Activated CD4-positive, alpha-beta T cell treated with anti-CD3 and anti-CD28 coated beads, Interleukin-2, amount 10 ng/mL, durations not matched to agents 7 days and 5 days (primary cell): ENCODE measurements at regions of chr3 and their contacts with region 1.

Region 1: DNA sequence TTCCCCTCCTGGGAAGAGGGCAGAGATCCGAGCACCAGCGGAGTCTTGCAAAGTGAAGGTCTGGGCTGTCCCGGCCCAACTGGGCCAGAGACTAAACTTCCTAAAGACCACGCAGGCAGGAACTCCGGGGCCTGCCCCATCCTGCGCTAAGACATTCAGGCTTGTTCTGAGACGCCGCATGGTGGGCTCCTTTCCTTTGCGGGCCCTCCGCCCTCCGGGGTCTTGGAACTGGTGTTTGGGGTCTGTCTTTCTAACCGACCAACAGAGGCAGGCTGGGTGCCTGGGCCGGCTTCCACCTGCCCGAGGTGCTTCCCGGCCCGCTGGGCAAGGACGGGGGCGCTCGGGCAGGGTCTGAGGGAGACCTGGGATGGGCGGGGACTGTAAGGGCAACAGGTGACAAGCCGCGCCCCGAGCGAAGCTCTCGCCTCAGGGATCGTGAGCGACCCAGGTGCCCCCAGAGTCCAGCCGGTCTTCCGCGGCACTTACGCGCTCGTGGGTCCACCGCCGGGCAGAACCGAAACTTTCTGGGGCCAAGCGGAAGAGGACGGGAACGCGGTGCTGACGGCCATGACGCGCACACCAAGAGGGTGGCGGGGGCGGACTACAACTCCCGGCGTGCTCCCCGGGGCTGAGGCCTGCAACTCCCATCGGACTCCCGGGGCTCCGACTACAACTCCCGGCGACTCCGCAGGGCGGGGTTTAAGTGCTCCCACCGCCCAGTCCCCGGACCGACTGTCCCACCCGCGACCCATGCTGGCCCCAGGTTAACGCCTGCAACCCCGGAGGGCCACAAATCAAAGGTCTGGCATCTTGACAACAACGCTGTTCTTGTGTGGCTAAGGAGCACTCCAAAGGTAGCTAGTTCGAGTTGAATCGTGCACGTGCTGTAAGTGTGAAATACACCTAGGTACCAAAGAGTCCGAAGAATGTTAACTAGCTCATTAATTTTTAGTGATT is at the start of gene FYCO1:
- DNase-seq: peak; percentile 87
- H3K4me3 Mint-ChIP-seq: peak within 1 kb of the TSS; percentile 83
- H3K27ac Mint-ChIP-seq: peak within 1 kb of the TSS; percentile 95
- H3K4me1 Mint-ChIP-seq: peaks cover 49% of the 10 kb centered on the region
- H3K27me3 Mint-ChIP-seq: peaks cover 7% of the 10 kb centered on the region
- total RNA-seq, gene FYCO1: 15.1 to 15.7 TPM

Region 2: DNA sequence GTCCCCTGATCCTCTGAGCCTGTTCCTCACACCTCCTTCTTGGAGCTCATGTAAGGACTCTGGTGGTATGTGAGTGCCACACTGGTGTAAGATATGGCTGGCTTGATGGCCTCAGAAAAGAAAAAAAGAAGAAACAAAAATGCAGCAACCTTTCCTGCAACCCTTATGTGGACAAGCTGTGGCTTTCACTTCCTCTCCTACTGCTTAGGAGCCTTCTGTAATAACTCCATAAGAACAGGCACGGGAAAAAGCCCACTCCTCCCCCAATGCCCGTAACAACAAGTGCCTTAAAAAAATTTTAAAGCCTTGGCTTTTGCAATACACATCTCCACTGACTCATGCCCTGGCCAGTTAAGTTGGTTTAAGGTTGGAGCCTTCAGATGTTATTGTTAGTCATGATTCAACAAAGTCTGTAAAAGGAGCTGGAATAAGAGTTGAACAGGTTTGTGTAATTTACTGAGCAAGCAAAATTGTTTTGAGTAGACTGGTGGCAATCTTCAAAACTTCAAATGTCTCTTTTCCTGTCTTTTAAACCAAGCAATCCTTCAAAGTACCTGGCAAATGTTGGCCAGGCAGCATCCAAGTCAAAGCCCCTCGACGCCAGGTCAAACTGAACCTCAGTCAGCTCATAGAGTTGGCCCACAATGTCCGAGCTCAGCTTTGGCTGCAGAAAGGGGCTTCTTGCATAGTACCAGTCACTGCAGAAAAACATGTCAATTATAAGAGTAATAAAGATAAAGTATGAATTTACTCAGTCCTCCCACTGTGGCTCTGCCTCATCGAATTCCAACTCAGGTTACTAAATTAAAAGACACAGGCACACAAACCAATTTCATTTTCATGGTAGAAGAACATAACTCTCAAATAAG is 22.7 kb before region 1 on chr3:
- CTCF ChIA-PET with region 1: interaction called, 21 read pairs
- POLR2A ChIA-PET with region 1: no interaction called
- DNase-seq: no peak
- H3K4me3 Mint-ChIP-seq: no peak overlapping the region
- H3K27ac Mint-ChIP-seq: peak overlapping the region; percentile 78
- H3K4me1 Mint-ChIP-seq: peaks cover 66% of the 10 kb centered on the region
- H3K27me3 Mint-ChIP-seq: no peaks in the 10 kb centered on the region

Region 3: GRCh38 chr3:45978006-45978761 is 17.3 kb before region 1 on chr3:
- CTCF ChIA-PET with region 1: interaction called, 45 read pairs
- POLR2A ChIA-PET with region 1: no interaction called
- DNase-seq: peak; percentile 79
- H3K4me3 Mint-ChIP-seq: peak overlapping the region; percentile 58
- H3K27ac Mint-ChIP-seq: peak overlapping the region; percentile 95
- H3K4me1 Mint-ChIP-seq: peaks cover 81% of the 10 kb centered on the region
- H3K27me3 Mint-ChIP-seq: no peaks in the 10 kb centered on the region

Region 4: DNA sequence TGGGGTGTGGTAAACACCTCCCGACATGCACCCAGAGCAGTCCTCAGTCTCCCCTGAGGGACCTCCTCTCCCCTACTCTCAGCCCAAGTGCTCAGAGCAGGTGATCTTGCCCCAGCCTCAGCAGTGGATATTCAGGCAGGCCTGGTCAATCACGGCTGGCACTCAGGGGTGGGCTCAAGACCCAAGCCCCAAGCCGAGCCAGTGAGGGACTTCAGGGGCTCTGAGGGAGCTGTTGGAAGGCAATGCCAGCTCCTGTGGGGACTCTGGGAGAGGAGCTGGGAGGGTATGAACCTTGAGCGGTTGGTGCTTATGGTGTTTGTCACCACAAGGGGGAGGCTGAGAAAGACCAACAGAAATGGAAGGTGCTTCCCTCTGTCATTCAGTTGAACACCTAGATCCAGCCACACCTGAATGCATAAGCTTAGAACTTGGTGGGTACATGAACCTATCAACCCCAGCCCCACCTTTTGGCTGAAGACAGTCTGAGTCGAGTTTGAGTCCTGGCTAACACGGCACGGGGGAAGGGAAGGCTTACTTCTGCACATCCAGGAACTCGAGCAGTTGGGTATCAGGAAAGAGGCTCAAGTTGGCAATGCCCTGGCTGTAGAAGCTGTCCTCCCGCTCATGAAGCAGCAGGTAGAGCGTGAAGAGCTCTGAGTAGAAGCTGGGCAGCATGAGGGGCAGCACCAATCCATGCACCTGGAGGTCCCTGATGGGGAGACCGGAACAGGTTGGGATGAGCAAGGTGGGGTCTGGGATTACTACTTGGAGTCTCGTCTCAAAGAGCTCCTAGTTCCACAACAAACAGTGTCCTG is 678.7 kb after region 1 on chr3:
- CTCF ChIA-PET with region 1: no interaction called
- POLR2A ChIA-PET with region 1: no interaction called
- DNase-seq: no peak
- H3K4me3 Mint-ChIP-seq: no peak overlapping the region
- H3K27ac Mint-ChIP-seq: no peak overlapping the region
- H3K4me1 Mint-ChIP-seq: no peaks in the 10 kb centered on the region
- H3K27me3 Mint-ChIP-seq: no peaks in the 10 kb centered on the region